Dendritic cell treated with granulocyte-macrophage colony-stimulating factor and Interleukin-4, amounts not matched to agents 40 ng/mL and 50 ng/mL, for 4 days (primary cell): ENCODE measurements at regions of chr2 and their contacts with region 1.

Region 1: DNA sequence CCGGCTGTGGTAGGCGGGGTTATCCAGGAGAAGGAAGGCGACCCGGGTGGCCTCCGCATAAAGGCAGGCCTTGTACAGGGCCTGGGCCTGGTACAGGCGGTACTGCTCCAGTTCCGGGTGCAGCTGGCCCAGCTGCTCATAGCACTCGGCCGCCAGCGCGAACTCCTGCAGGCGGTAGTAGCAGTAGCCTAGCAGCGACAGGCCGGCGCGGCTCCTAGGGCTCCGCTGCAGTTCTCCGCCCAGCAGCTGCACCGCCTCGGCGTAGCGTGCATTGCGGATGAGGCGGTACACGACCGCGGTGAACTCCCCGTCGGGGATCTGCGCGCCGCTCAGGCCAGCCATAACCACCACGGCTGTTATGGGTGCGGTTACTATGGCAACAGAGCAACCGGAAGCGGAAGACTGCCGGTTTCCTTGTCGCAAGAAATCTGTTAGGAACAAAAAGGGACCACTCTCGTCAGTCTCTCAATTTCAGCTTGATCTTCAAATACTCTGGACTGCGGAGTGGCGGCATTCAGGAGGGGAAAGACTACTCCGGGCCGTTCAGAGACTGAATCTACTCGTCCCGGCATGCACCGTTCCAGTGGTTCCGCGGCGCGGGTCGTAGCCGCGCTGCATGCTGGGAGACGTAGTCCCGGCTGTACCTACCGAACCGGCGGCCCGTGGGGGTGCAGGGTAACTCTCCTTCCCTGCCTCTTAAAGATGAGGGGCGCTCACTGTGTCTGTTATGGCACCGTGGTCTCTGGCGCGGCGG is 160.0 kb downstream of the AGPS start:
- H3K4me3 Mint-ChIP-seq: peak overlapping the region; percentile 87
- H3K27ac Mint-ChIP-seq: peak overlapping the region; percentile 99
- H3K4me1 Mint-ChIP-seq: peaks cover 10% of the 10 kb centered on the region
- H3K27me3 Mint-ChIP-seq: no peaks in the 10 kb centered on the region

Region 2: GRCh38 chr2:177618255-177619253 is 66.0 kb after region 1 on chr2:
- intact Hi-C with region 1: loop called (anchors 1 kb)
- H3K4me3 Mint-ChIP-seq: peak overlapping the region; percentile 92
- H3K27ac Mint-ChIP-seq: peak overlapping the region; percentile 99
- H3K4me1 Mint-ChIP-seq: no peaks in the 10 kb centered on the region
- H3K27me3 Mint-ChIP-seq: peaks cover 3% of the 10 kb centered on the region

Region 3: DNA sequence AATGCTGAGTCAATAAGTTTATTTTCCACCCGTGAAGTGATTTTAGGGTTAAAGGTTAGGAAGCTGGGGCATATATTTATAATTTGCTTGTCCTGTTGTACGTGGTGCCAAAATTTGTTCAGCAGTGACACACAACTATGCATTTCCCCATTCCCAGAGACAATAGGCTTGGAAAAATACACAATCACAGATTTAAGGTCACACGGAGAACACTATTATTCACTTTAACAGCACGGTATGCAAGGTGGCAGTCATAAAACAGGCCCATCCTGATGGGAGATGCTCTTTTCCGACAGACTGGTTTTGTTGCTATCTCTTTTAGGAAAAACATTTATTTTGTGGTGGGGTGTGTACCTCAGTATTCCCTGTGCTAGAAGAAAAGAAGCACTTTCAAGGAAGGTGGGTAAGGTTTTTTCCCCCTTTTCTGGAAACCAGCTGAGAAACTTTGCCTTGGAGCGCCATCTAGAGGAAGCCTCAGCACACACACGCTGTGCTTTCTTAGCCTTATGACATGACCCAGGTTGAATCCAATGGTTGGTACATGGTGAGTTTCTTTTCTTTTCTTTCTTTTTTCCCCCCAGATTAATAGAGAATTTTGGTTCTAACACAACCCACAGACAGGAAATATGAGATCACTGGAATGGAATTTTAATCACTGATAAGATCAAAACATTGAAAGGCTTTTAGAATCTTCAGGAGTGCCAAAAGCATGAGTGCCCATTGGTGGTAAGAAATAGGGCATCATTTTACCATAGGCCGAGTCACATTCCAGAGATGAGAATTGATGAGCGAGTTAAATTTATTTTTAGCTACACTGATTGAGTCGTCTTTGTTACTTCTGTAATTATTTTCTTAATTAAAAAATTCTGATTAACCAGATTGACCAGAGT is 172.0 kb after region 1 on chr2:
- intact Hi-C with region 1: no loop called
- H3K4me3 Mint-ChIP-seq: no peak overlapping the region
- H3K27ac Mint-ChIP-seq: no peak overlapping the region
- H3K4me1 Mint-ChIP-seq: no peaks in the 10 kb centered on the region
- H3K27me3 Mint-ChIP-seq: peaks cover 2% of the 10 kb centered on the region